ENCODE measurements at regions of chr4 and their contacts with region 1.

Region 1: DNA sequence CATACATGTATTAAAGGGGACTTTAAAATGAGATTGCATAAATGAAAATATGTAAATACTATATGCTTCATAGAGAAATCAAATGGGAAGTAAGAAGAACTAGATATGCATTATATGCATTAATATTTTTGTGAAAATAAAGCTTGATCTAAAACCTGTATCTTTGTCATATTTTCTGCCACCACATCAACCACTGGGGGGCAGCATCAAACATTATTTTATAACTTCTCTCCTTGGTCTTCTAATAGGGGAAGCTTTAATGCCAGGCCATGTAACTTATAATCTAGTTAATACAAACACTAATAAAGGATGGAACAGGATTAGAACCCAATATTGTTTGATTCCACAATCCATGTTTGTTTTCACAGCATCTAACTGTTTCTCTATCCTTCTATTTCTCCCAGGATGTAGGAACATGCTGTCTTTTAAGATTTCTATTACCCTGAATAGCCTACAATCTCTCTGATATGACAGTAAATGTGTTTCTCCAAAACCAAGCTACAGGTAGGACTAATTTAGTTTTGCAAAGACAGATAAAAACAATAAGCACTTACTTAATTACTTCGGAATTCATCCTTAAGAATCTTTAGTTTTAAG is 10.0 kb downstream of the QRFPR start:
- DNase-seq: no peak
- H3K4me3 ChIP-seq: no peak overlapping the region
- CTCF ChIP-seq: peak; percentile 39

Region 2: DNA sequence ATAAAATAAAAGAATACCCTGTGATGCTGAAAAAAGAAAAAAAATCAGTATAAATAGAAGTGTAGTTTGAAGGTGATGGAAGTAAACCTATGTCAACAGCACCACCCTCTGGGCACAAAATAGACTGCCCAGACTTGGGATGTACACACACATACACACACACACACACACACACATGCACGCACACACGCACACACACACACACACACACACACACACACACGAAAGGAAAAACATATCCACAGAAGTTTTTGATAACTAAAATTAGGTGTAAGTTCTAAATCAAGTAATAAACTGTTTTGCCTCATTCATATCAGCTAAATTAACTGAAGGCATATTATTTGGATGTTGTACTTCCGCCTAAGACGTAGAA is 285.4 kb after region 1 on chr4:
- CTCF ChIA-PET with region 1: interaction called, 26 read pairs
- POLR2A ChIA-PET with region 1: no interaction called
- DNase-seq: no peak
- H3K4me3 ChIP-seq: no peak overlapping the region
- CTCF ChIP-seq: peak; percentile 45

Region 3: DNA sequence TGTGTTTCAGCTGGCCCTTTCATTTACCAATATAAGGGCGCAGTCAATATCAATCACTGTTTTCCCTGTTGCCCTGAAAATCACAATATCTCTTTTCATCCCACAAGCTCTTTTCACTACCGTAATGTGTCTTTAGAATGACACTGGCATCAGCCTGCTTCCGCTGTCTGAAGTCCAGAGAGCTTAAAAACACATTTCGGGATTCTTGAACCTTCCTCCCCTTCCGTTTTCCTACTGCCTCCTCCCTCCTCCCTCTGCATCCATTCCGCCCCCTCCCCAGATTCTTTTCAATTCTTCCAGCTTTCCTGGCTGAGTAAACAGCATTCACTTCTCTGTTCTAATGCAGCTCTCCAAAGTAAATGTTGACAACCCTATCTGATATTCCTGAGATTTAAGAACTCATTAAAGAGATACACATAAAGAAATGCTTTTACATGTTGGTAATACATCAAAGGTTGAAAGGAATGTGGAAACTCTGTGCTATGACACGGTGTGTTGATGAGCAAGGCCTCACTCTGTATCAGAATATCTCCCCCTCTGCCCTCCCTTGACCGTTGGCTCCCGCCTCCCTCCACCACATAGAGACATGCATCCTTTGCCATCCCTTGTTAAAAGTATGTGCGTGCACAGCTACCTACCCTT is 1942.2 kb after region 1 on chr4:
- CTCF ChIA-PET with region 1: no interaction called
- POLR2A ChIA-PET with region 1: no interaction called
- DNase-seq: no peak
- H3K4me3 ChIP-seq: no peak overlapping the region
- CTCF ChIP-seq: no peak

Measured in AG04449 (cell line).